ENCODE measurements at regions of chr15 and their contacts with region 1.

Region 1: GRCh38 chr15:60798821-60799220 is 319.9 kb upstream of the ICE2 start:
- DNase-seq: no peak
- ATAC-seq: no peak
- H3K4me3 Mint-ChIP-seq: no peak overlapping the region
- H3K27ac Mint-ChIP-seq: peak overlapping the region; percentile 32
- H3K4me1 Mint-ChIP-seq: peaks cover 41% of the 10 kb centered on the region
- H3K27me3 Mint-ChIP-seq: no peaks in the 10 kb centered on the region

Region 2: GRCh38 chr15:60275624-60276023 is 523.2 kb before region 1 on chr15:
- CTCF ChIA-PET with region 1: no interaction called
- POLR2A ChIA-PET with region 1: no interaction called
- DNase-seq: no peak
- ATAC-seq: no peak
- H3K4me3 Mint-ChIP-seq: no peak overlapping the region
- H3K27ac Mint-ChIP-seq: no peak overlapping the region
- H3K4me1 Mint-ChIP-seq: no peaks in the 10 kb centered on the region
- H3K27me3 Mint-ChIP-seq: peaks cover 20% of the 10 kb centered on the region

Region 3: DNA sequence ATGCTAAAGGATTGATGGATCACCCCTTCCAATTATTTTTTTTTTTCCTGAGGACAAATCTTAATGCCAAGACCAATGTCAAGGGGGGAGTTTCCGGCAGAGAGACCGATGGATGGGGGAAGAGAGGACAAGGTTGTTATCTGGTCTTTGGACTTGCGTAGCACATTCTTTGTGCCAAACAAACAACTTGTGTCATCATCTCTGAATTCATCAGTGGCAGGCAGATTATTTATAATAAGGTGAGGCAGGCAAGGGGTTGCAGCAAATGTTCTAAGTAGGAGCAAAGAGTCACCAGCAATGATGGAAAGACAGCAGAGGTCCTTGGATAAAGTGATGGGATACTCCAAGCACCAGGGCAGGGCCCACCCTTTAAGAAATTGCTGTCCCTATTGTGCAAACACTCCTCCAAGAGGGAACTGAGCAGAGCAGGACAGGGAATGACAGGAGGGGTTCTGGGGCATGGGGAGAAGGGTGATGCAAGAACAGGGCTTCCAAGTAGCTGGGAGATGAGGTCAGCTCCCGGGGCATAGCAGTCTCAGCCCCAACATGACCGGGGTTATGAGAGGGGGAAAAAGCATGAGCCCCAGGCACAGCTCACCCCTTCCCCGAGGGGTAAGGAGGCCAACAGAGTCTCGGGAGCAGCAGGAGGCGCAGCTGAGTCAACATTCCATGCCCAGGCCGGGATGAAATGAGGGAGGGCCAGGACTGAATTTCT is 458.5 kb before region 1 on chr15:
- CTCF ChIA-PET with region 1: no interaction called
- POLR2A ChIA-PET with region 1: no interaction called
- DNase-seq: no peak
- ATAC-seq: no peak
- H3K4me3 Mint-ChIP-seq: no peak overlapping the region
- H3K27ac Mint-ChIP-seq: no peak overlapping the region
- H3K4me1 Mint-ChIP-seq: no peaks in the 10 kb centered on the region
- H3K27me3 Mint-ChIP-seq: peaks cover 7% of the 10 kb centered on the region

Region 4: GRCh38 chr15:60729850-60730458 is 68.9 kb before region 1 on chr15:
- CTCF ChIA-PET with region 1: no interaction called
- POLR2A ChIA-PET with region 1: no interaction called
- DNase-seq: no peak
- ATAC-seq: no peak
- H3K4me3 Mint-ChIP-seq: no peak overlapping the region
- H3K27ac Mint-ChIP-seq: no peak overlapping the region
- H3K4me1 Mint-ChIP-seq: peaks cover 9% of the 10 kb centered on the region
- H3K27me3 Mint-ChIP-seq: no peaks in the 10 kb centered on the region

Region 5: DNA sequence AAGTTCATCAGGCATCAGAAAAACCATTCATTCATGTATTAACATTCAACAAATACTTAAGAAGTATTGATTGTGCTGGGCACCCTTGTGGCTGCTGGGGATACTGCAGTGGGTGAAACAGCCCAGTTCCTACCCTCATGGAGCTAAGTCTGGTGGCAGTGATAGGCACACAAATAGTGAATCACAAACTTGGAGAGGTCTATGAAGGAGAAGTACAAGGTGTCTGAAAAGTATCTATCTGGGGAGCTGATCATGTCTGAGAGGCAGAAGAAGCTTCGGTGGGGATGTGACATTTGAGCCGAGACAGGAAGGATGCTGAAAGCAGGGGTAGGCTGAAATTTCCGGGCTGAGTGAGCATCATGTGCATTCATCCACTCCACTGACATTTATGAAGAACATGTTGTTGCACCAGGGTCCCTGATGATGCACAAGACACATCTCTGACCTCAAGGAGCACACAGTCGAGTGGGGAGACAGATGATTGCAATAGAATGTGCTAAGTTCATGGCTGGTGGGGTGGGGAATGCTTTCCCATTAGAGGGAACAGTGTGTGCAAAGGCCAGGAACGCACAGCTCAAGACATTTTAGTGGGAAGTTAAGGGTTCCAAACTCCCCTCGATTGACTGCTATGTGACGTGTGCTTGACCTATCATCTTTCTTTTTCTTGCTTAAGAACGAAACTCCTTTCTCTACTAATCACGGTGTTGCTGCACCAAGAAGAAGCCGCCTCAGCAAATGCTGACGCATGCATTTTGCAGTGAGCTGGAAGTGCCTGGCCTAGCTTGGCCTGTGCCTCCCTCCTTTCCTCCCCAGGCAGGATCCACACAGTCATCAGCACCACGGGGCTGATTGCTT is 10.8 kb before region 1 on chr15:
- CTCF ChIA-PET with region 1: interaction called, 31 read pairs
- POLR2A ChIA-PET with region 1: no interaction called
- DNase-seq: peak; percentile 38
- ATAC-seq: peak; percentile 60
- H3K4me3 Mint-ChIP-seq: no peak overlapping the region
- H3K27ac Mint-ChIP-seq: peak overlapping the region; percentile 16
- H3K4me1 Mint-ChIP-seq: peaks cover 6% of the 10 kb centered on the region
- H3K27me3 Mint-ChIP-seq: no peaks in the 10 kb centered on the region

Region 6: DNA sequence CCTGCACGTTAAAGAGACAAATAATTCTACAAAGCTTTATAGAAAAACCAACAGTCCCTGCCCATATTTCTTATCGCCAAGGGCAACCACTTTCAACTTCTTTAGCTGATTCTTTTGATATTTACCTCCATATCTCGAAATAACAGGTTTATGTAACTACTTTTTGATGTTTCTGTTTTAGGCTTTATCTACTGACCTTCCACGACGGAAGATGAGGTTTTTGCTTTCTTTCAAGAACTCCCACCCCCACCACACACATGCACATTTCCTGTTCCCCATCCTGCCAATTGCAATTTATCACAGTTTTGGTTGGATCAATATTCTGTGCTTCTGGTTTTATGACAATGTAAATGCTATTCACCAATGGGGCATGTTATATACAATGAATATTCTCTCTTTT is 10.6 kb after region 1 on chr15:
- CTCF ChIA-PET with region 1: interaction called, 15 read pairs
- POLR2A ChIA-PET with region 1: interaction called, 3 read pairs
- DNase-seq: no peak
- ATAC-seq: peak; percentile 44
- H3K4me3 Mint-ChIP-seq: peak overlapping the region; percentile 20
- H3K27ac Mint-ChIP-seq: peak overlapping the region; percentile 67
- H3K4me1 Mint-ChIP-seq: peaks cover 51% of the 10 kb centered on the region
- H3K27me3 Mint-ChIP-seq: peaks cover 2% of the 10 kb centered on the region

Region 7: DNA sequence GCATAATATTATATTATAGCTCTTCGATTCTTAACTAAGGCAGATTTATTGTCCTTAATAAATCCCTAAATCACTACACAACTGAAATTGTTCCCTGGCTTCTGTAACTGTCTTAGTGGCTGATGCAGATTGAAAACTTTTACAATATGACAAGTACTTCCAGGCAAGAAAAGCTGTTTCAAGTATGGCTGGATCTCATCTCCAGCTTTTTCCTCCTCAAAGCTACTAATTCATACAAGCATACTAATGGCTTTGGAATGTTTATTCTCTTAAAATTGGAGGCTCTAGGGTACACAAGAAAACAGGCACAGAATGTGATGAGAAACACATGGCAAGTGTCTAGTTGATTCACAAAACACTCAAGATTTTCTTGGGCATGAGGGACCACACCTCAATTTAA is 31.7 kb after region 1 on chr15:
- CTCF ChIA-PET with region 1: no interaction called
- POLR2A ChIA-PET with region 1: no interaction called
- DNase-seq: no peak
- ATAC-seq: no peak
- H3K4me3 Mint-ChIP-seq: no peak overlapping the region
- H3K27ac Mint-ChIP-seq: no peak overlapping the region
- H3K4me1 Mint-ChIP-seq: no peaks in the 10 kb centered on the region
- H3K27me3 Mint-ChIP-seq: peaks cover 2% of the 10 kb centered on the region